ENCODE measurements at regions of chr9 and their contacts with region 1.

Region 1: GRCh38 chr9:9002826-9003583 is 1203.4 kb upstream of the DMAC1 start:
- DNase-seq: no peak
- ATAC-seq: peak; percentile 79

Region 2: DNA sequence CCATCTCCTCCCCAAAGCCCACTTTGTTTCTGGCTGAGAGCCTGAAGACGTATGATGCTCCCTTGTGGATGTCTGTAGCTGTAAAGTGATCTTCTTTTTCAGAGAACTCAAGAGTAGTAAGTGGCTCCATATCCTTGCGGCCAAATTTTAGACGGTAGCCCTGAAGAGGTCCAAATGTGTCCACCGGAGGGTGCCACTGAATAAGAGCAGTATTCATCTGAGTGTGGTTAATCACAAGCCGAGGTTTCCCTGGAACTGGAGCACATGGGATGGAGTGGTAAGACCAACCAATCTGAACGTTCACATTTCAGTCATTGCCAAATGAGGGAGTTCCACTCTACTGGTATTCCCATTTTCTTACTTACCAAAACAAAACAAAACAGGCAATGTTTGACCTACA is 516.9 kb before region 1 on chr9:
- intact Hi-C with region 1: loop called (anchors 5 kb)
- DNase-seq: no peak
- ATAC-seq: peak; percentile 44

Region 3: GRCh38 chr9:8857926-8858595 is 144.9 kb before region 1 on chr9:
- intact Hi-C with region 1: loop called (anchors 5 kb)
- DNase-seq: peak; percentile 88
- ATAC-seq: peak; percentile 92

Region 4: GRCh38 chr9:8895861-8896224 is 107.2 kb before region 1 on chr9:
- intact Hi-C with region 1: loop called (anchors 5 kb)
- DNase-seq: no peak
- ATAC-seq: peak; percentile 78

Measured in Right ventricle myocardium inferior (tissue), 1 donor.